ENCODE measurements at regions of chr5 and their contacts with region 1.

Region 1: DNA sequence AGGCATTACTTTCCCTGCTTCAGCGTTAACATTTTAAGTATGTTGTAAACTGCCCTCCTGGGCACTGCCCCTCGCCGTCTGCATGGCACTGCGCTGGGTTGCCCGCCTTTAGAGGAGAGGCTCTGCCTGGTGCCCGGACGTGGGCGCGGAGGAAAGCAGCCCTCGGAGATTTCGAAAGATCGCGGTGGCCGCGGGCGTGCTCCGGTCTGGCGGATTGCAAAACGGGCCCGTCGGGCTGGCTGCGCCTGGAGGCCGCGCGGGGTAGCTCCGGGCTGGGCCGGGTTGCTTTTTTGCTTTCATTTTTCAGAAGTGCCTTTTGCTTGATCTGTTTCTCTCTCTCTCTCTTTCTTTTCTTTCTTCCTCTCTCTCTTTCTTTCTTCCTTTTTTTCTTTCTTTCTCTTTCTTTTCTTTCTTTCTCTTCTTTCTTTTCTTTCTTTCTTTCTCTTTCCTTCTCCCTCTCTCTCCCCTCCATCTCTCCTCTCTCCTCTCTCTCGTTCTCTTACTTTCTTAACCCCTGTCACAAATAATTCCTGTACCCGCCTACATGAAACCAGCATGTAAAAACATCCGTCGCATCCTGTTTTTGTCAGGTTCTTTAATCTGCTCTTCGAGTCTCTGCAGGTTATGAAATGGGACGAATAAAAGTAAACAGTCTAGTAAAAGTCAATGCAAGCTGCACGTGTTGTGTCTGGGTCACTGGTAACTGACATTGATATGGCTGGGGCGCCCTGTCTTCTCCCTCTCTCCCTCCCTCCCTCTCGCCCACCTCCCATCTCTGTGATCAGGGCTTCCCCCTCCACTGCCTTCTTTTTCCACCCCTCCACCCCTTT is 1.7 kb downstream of the FST start:
- DNase-seq: peak; percentile 48 to 80
- ATAC-seq: peak; percentile 61 to 78 (median 74)
- H3K4me3 ChIP-seq: peak overlapping the region; percentile 7 to 85 (median 66)
- H3K27ac ChIP-seq: peak overlapping the region in 8 of 10 donors; percentile 0 to 71 (median 38)
- H3K4me1 ChIP-seq: peaks cover 0 to 40% (median 21%) of the 10 kb centered on the region in 9 donors
- H3K27me3 ChIP-seq: peaks cover 0 to 67% (median 0%) of the 10 kb centered on the region in 7 donors
- CTCF ChIP-seq: peak in 4 of 9 donors; percentile 15 to 32 (median 26)

Region 2: DNA sequence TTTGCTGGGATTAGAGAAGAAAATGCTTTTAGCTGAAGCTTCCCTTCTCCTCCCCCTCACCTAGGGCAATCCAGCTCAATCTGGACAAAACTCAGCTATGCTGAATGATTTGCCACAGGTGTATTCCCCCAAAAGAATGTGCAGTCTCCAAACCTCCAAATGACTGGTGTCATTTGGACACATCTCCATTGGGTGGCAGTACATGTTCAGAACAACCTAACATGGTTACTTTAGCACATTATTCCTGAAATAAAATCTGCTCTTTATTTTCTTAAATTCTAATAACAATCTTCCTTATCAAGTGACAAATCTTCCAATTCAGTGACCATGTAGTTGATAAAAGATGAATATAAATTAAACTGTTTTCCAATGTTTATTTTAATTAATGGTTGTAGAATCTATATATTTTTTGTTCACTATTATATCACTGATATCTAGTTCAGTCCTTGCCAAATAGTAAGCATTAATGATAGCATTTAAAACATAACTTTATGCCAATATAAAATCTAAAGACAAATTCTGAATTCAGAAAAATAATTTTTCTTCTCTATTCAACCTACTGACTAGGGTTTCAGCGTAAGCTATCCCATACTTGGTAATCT is 311.3 kb before region 1 on chr5:
- intact Hi-C with region 1: loop called in 1 of 10 experiments (anchors 10 kb)
- DNase-seq: no peak
- ATAC-seq: peak in 1 of 8 donors; percentile 57
- H3K4me3 ChIP-seq: no peak overlapping the region
- H3K27ac ChIP-seq: no peak overlapping the region
- H3K4me1 ChIP-seq: peaks cover 4 to 29% (median 17%) of the 10 kb centered on the region in 9 donors
- H3K27me3 ChIP-seq: no peaks in the 10 kb centered on the region
- CTCF ChIP-seq: peak in 7 of 9 donors; percentile 46 to 70 (median 61)

Region 3: GRCh38 chr5:53991942-53992341 is 509.8 kb after region 1 on chr5:
- intact Hi-C with region 1: loop called in 1 of 10 experiments (anchors 10 kb)
- DNase-seq: no peak
- ATAC-seq: peak in 1 of 8 donors; percentile 28
- H3K4me3 ChIP-seq: no peak overlapping the region
- H3K27ac ChIP-seq: no peak overlapping the region
- H3K4me1 ChIP-seq: no peaks in the 10 kb centered on the region
- H3K27me3 ChIP-seq: no peaks in the 10 kb centered on the region
- CTCF ChIP-seq: peak in 8 of 9 donors; percentile 11 to 55 (median 41)

Region 4: DNA sequence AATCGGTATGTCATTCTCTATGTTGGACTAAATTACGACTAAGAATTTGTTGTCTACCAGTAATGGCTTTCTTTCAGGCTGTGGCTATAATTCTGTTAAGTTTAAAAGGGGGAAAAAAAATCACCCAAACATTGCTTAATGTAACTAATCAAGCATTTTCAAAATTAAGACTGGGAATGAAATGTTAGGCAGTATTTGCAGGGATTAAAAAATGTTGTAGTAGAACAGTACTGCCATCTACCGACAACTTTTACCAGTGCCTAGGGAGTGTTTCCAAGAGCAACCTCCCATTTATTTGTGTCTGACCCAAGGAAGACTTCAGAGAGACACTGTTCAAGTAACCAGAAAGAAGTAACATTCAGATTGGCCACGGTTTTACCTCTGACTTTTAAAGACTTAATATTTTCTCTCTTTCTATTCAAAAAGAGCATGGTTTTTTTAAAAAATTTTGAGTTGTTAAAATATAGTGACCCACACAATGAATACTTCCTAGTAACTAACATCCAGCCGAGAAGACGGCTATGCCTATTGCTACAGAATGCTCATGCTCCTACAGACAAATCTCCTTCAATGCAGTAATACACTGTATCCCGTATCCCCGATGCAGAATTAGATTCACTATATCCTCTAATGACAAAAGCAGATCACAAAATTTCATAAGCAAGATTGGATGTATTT is 735.9 kb after region 1 on chr5:
- intact Hi-C with region 1: loop called in 6 of 10 experiments (anchors 1 to 5 kb)
- DNase-seq: peak in 1 of 2 donors; percentile 57
- ATAC-seq: peak in 7 of 8 donors; percentile 79 to 88 (median 85)
- H3K4me3 ChIP-seq: no peak overlapping the region
- H3K27ac ChIP-seq: no peak overlapping the region
- H3K4me1 ChIP-seq: peaks cover 0 to 57% (median 27%) of the 10 kb centered on the region in 9 donors
- H3K27me3 ChIP-seq: no peaks in the 10 kb centered on the region
- CTCF ChIP-seq: peak; percentile 66 to 93 (median 81)

Region 5: GRCh38 chr5:54234304-54234933 is 752.3 kb after region 1 on chr5:
- intact Hi-C with region 1: loop called in 5 of 10 experiments (anchors 5 kb)
- DNase-seq: no peak
- ATAC-seq: peak in 1 of 8 donors; percentile 25
- H3K4me3 ChIP-seq: peak overlapping the region in 2 of 10 donors; percentile 9 to 23
- H3K27ac ChIP-seq: no peak overlapping the region
- H3K4me1 ChIP-seq: peaks cover 0 to 77% (median 18%) of the 10 kb centered on the region in 9 donors
- H3K27me3 ChIP-seq: no peaks in the 10 kb centered on the region
- CTCF ChIP-seq: peak; percentile 14 to 72 (median 59)